Breast epithelium (tissue), 4 donors: ENCODE measurements at regions of chr1 and their contacts with region 1.

Region 1: GRCh38 chr1:31788138-31788824 is 24.1 kb upstream of the ADGRB2 start:
- DNase-seq: peak; percentile 87 to 95
- H3K4me3 ChIP-seq: peak overlapping the region; percentile 59 to 83 (median 63)
- H3K27ac ChIP-seq: peak overlapping the region; percentile 88 to 97
- H3K4me1 ChIP-seq: peaks cover 0 to 5% of the 10 kb centered on the region in 2 donors
- H3K27me3 ChIP-seq: no peaks in the 10 kb centered on the region
- CTCF ChIP-seq: no peak
- POLR2A ChIP-seq: peak; percentile 12

Region 2: DNA sequence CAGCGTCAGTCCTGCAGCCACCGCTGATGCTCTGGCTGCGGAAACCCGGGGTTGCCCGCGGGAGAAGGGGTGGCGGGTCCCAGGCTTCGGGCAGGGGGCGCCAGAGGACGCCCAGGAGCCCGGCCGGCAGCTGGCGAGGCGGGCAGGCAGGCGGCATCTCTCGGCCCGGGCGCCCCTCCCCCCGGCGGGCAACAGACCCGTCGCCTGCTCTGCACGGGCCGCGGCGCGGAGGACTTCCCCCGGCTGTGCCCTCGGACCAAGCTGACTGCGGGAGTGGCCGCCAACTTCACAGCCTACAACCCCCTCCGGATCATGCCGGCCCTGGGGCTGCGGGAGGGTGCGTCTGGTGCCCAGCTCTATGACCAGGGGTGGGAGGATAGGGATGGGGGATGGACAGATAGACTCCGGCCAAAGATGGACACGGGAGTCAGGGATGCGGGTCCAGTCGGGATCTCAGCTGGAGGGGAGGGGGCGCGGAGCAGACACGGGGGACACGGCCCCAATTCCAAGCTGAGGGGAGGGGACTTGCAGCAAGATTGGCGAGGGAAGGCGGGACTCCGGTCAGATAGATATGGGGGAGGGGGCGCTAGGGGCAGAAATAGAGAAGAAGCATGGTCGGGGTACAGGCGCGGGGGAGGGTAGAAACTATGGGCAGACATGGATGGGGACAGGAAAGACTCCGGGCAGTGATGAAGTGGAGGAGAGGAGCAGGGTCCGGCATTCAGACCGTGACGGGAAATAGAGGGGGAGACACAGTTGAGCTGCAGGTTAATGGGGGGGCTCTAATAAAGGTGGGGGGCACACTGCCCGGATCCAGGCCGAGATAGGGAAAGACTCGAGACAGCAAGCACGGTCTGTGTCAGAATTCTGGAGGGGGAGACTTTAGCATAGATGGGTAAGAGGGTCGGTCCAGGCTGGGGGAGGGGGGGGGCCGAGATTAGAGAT is 25.3 kb before region 1 on chr1:
- intact Hi-C with region 1: loop called (anchors 1 kb)
- DNase-seq: peak; percentile 51 to 64
- H3K4me3 ChIP-seq: peak overlapping the region; percentile 43 to 84 (median 61)
- H3K27ac ChIP-seq: no peak overlapping the region
- H3K4me1 ChIP-seq: peaks cover 7 to 16% of the 10 kb centered on the region in 2 donors
- H3K27me3 ChIP-seq: peaks cover 0 to 11% of the 10 kb centered on the region in 2 donors
- CTCF ChIP-seq: peak in 2 of 3 donors; percentile 35 to 50
- POLR2A ChIP-seq: no peak

Region 3: DNA sequence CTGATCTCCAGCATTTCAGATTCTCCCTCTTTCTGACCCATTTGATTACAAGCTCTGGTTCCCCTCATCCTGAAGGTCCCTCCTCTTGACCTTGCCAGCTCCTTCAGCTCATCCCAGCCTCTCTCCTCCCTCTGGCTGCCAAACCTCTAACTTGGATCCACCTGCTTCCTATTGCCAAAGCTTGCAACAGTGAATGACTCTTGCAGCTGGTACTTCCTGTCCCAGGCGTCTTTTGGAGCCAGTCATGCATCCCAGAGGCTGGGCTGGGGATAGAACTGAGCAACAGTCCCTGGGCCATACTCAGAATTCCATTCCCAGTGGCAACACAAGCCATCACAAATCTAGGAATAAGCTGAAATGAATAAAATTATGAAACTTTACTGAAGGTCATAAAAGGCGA is 55.2 kb after region 1 on chr1:
- intact Hi-C with region 1: no loop called
- DNase-seq: peak in 1 of 2 donors; percentile 78
- H3K4me3 ChIP-seq: no peak overlapping the region
- H3K27ac ChIP-seq: no peak overlapping the region
- H3K4me1 ChIP-seq: no peaks in the 10 kb centered on the region
- H3K27me3 ChIP-seq: no peaks in the 10 kb centered on the region
- CTCF ChIP-seq: no peak
- POLR2A ChIP-seq: no peak